ENCODE measurements at regions of chr11 and their contacts with region 1.

Region 1: DNA sequence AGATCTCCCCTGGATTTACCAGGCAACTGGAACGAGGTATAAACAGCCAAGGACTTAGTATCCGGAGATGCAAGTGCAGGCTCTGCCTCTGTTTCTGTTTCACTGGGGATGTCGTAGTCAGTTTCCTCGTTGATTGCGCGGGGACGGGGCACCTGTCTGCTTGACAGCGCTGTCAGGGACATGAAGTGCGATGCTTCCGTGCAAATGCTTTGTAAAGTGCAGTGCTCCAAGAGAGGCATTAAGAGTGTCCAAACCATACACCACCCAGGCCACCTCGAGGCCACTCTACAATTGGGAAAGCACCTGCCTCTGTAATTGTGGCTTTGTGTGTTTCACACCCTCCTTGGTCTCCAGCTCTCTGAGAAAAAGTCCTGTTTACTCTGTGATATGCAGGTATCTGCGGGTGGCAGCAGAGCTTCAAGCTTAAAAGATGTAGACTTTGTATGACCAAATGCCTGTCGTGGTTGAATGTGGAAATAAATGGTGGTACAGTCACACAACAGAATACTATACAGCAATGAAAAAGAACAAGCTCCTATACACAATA is 18.6 kb upstream of the CD5 start:
- DNase-seq: peak; percentile 78
- ATAC-seq: peak; percentile 60
- H3K4me3 Mint-ChIP-seq: peak overlapping the region; percentile 71
- H3K27ac Mint-ChIP-seq: peak overlapping the region; percentile 96
- H3K4me1 Mint-ChIP-seq: peaks cover 53% of the 10 kb centered on the region
- H3K27me3 Mint-ChIP-seq: no peaks in the 10 kb centered on the region

Region 2: GRCh38 chr11:60944490-60945294 is 139.0 kb before region 1 on chr11:
- CTCF ChIA-PET with region 1: no interaction called
- POLR2A ChIA-PET with region 1: no interaction called
- DNase-seq: no peak
- ATAC-seq: no peak
- H3K4me3 Mint-ChIP-seq: no peak overlapping the region
- H3K27ac Mint-ChIP-seq: no peak overlapping the region
- H3K4me1 Mint-ChIP-seq: peaks cover 10% of the 10 kb centered on the region
- H3K27me3 Mint-ChIP-seq: peaks cover 3% of the 10 kb centered on the region

Region 3: GRCh38 chr11:61061081-61061826 is 22.4 kb before region 1 on chr11:
- CTCF ChIA-PET with region 1: interaction called, 22 read pairs
- POLR2A ChIA-PET with region 1: interaction called, 8 read pairs
- DNase-seq: peak; percentile 82
- ATAC-seq: peak; percentile 83
- H3K4me3 Mint-ChIP-seq: peak overlapping the region; percentile 71
- H3K27ac Mint-ChIP-seq: peak overlapping the region; percentile 93
- H3K4me1 Mint-ChIP-seq: peaks cover 70% of the 10 kb centered on the region
- H3K27me3 Mint-ChIP-seq: no peaks in the 10 kb centered on the region

Region 4: DNA sequence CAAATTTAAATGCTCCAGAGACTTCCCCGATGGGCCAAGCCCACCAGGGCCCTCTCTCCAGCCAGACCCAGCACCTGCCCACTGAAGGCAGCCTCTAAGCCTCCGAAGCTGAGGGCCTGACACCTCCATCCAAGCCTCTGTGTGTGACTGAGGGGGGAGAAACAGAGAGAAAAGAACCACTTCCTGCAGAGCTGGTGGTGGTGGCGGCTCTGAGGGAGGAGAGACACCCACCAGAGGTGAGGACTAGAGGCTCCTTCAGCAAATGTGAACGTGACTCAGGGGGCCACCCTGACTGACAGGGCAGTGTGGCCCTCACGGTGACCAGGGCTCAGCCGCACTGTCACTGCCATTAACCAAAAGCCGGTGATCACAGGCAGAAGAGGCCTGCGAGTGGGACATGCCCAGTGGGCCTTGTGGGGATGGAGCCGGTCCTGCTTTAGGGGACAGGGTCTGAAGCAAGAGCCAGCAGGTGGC is 12.4 kb before region 1 on chr11:
- CTCF ChIA-PET with region 1: interaction called, 39 read pairs
- POLR2A ChIA-PET with region 1: interaction called, 17 read pairs
- DNase-seq: peak; percentile 87
- ATAC-seq: peak; percentile 97
- H3K4me3 Mint-ChIP-seq: peak overlapping the region; percentile 66
- H3K27ac Mint-ChIP-seq: peak overlapping the region; percentile 97
- H3K4me1 Mint-ChIP-seq: peaks cover 83% of the 10 kb centered on the region
- H3K27me3 Mint-ChIP-seq: no peaks in the 10 kb centered on the region

Region 5: GRCh38 chr11:61129639-61130523 is 46.2 kb after region 1 on chr11:
- CTCF ChIA-PET with region 1: interaction called, 23 read pairs
- POLR2A ChIA-PET with region 1: interaction called, 5 read pairs
- DNase-seq: peak; percentile 94
- ATAC-seq: peak; percentile 94
- H3K4me3 Mint-ChIP-seq: peak overlapping the region; percentile 32
- H3K27ac Mint-ChIP-seq: peak overlapping the region; percentile 47
- H3K4me1 Mint-ChIP-seq: peaks cover 23% of the 10 kb centered on the region
- H3K27me3 Mint-ChIP-seq: no peaks in the 10 kb centered on the region

Region 6: DNA sequence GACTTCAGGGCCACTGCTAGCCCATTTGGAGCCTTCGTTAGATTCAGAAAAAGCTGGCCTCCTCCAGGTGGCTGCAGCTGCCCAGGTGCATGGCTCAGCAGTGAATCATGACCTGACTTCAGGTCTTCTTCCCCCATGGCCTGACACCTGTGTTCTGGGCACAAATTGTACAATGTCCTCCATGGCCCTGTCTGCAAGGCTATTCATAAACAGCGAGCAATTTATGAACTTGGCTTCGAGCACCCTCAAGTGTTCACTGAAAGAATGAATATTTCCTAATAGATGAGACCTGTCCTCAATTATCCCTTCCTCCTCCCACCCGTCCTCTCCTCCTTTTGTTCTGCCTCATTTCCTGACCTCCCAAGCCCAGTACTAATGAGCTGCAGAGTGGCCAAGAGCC is 89.8 kb after region 1 on chr11:
- CTCF ChIA-PET with region 1: no interaction called
- POLR2A ChIA-PET with region 1: no interaction called
- DNase-seq: no peak
- ATAC-seq: no peak
- H3K4me3 Mint-ChIP-seq: no peak overlapping the region
- H3K27ac Mint-ChIP-seq: no peak overlapping the region
- H3K4me1 Mint-ChIP-seq: peaks cover 16% of the 10 kb centered on the region
- H3K27me3 Mint-ChIP-seq: peaks cover 14% of the 10 kb centered on the region

Measured in activated CD8-positive, alpha-beta T cell treated with anti-CD3 and anti-CD28 coated beads, Interleukin-2, amount 10 ng/mL, durations not matched to agents 7 days and 5 days (primary cell).